BJ (cell line): ENCODE measurements at regions of chr2 and their contacts with region 1.

Region 1: DNA sequence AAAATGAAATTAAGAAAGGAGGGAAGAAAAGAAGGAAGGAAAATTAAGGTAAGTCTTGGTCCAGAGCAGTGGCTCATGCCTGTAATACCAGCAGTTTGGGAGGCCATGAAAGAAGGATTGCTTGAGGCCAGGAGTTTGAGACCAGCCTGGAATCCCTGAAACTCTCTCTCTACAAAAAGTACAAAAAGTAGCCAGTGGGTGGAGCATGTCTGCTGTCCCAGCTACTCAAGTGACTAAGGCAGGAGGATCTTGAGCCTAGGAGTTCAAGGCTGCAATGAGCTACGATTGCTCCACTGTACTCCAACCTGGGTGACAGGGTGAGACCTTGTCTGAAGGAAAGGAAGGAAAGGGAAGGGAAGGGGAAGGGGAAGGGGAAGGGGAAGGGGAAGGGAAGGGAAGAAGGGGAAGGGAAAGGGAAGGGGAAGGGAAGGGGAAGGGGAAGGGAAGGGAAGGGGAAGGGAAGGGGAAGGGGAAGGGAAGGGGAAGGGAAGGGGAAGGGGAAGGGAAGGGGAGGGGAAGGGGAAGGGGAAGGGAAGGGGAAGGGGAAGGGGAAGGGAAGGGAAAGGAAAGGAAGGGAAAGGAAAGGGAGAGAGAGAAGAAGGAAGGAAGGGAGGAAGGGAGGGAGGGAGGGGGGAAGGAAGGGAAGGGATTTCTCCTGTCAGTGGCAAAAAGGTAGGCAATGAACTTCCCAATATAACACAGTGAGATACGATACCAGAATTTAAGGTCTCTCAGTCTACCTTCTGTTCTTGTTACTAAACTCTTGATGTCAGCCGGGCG is 412.8 kb downstream of the CMPK2 start:
- DNase-seq: no peak
- H3K4me3 ChIP-seq: no peak overlapping the region
- H3K27me3 ChIP-seq: no peaks in the 10 kb centered on the region
- CTCF ChIP-seq: peak; percentile 13; the same call in 1 of the 2 replicates

Region 2: DNA sequence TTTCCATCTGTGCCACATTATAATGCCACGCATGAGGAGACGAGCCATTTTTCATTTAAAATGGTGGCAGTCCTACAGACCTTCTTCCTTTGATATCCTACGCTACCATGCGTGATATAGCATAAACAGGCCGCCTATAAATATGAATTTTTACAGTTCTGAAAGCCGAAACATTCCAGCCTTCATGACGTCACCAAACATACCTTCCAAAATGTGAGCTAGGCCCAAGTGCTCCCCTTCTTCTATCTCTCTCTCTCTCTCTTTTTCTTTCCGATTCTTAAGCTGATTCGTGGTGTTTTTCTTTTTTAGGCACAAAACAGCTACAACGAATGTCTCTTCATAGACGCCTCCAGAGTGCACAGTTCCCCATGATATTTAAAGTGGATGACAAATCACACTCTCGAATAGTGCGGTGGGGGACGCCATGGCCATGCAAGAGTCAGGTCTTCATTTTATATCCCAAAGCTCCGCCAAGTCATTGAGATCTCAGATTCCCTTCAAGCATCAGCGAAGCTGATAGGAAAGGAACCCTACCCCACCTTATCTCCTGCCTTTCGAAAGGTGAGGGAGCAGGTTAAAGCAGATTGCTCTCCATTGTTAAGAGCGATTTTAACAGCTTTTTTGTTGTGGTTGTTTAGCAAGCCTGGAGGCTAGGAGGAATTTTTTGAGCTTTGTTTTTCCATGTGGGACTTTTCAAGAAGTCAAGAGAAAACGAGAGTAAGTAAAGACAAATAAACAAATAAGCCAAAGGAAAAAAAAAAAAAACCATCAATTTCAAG is 23.5 kb before region 1 on chr2:
- CTCF ChIA-PET with region 1: no interaction called
- POLR2A ChIA-PET with region 1: interaction called, 24 read pairs
- DNase-seq: no peak
- H3K4me3 ChIP-seq: no peak overlapping the region
- H3K27me3 ChIP-seq: no peaks in the 10 kb centered on the region
- CTCF ChIP-seq: no peak

Region 3: GRCh38 chr2:6474161-6475140 is 21.6 kb after region 1 on chr2:
- CTCF ChIA-PET with region 1: no interaction called
- POLR2A ChIA-PET with region 1: no interaction called
- DNase-seq: no peak
- H3K4me3 ChIP-seq: no peak overlapping the region
- H3K27me3 ChIP-seq: no peaks in the 10 kb centered on the region
- CTCF ChIP-seq: no peak

Region 4: GRCh38 chr2:6909431-6910385 is 456.8 kb after region 1 on chr2:
- CTCF ChIA-PET with region 1: no interaction called
- POLR2A ChIA-PET with region 1: no interaction called
- DNase-seq: no peak
- H3K4me3 ChIP-seq: no peak overlapping the region
- H3K27me3 ChIP-seq: peaks cover 2% of the 10 kb centered on the region; the same call in 1 of the 2 replicates
- CTCF ChIP-seq: no peak